BJ (cell line): ENCODE measurements at regions of chr4 and their contacts with region 1.

Region 1: DNA sequence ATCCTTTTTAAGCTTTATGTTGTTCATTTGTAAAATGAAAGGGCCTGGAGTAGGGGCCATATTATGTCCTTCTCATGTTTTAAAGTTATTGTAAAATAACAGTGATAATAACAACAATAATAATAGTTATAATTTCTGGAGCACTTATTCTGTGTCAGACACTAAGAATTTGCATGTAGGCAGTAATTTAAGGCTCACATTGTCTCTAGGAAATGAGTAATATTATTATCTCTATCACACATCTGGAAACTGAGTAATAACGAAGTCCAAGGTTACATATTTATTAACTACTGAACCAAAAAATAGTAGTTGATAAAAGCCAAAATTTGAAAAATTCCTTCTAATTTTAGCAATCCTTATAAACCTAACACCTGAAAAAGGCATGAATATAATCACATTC is 520.7 kb upstream of the PABPC4L start:
- DNase-seq: no peak
- H3K4me3 ChIP-seq: no peak overlapping the region
- H3K27me3 ChIP-seq: no peaks in the 10 kb centered on the region
- CTCF ChIP-seq: no peak

Region 2: GRCh38 chr4:134490863-134491262 is 231.4 kb before region 1 on chr4:
- CTCF ChIA-PET with region 1: no interaction called
- POLR2A ChIA-PET with region 1: no interaction called
- DNase-seq: no peak
- H3K4me3 ChIP-seq: no peak overlapping the region
- H3K27me3 ChIP-seq: no peaks in the 10 kb centered on the region
- CTCF ChIP-seq: no peak

Region 3: GRCh38 chr4:134747108-134747805 is 25.0 kb after region 1 on chr4:
- CTCF ChIA-PET with region 1: no interaction called
- POLR2A ChIA-PET with region 1: no interaction called
- DNase-seq: no peak
- H3K4me3 ChIP-seq: no peak overlapping the region
- H3K27me3 ChIP-seq: no peaks in the 10 kb centered on the region
- CTCF ChIP-seq: no peak

Region 4: GRCh38 chr4:134807231-134807745 is 85.0 kb after region 1 on chr4:
- CTCF ChIA-PET with region 1: no interaction called
- POLR2A ChIA-PET with region 1: interaction called, 13 read pairs
- DNase-seq: no peak
- H3K4me3 ChIP-seq: no peak overlapping the region
- H3K27me3 ChIP-seq: no peaks in the 10 kb centered on the region
- CTCF ChIP-seq: no peak